ENCODE measurements at regions of chr5 and their contacts with region 1.

Region 1: GRCh38 chr5:118987988-118988865 is at the start of gene DTWD2:
- DNase-seq: peak; percentile 95
- ATAC-seq: peak; percentile 88
- H3K4me3 Mint-ChIP-seq: peak within 1 kb of the TSS; percentile 84
- H3K27ac Mint-ChIP-seq: peak within 1 kb of the TSS; percentile 83
- H3K4me1 Mint-ChIP-seq: peaks cover 33% of the 10 kb centered on the region
- H3K27me3 Mint-ChIP-seq: no peaks in the 10 kb centered on the region
- CTCF ChIP-seq: peak; percentile 93
- total RNA-seq, gene DTWD2: 3.5 and 4.0 TPM in 2 replicates

Region 2: DNA sequence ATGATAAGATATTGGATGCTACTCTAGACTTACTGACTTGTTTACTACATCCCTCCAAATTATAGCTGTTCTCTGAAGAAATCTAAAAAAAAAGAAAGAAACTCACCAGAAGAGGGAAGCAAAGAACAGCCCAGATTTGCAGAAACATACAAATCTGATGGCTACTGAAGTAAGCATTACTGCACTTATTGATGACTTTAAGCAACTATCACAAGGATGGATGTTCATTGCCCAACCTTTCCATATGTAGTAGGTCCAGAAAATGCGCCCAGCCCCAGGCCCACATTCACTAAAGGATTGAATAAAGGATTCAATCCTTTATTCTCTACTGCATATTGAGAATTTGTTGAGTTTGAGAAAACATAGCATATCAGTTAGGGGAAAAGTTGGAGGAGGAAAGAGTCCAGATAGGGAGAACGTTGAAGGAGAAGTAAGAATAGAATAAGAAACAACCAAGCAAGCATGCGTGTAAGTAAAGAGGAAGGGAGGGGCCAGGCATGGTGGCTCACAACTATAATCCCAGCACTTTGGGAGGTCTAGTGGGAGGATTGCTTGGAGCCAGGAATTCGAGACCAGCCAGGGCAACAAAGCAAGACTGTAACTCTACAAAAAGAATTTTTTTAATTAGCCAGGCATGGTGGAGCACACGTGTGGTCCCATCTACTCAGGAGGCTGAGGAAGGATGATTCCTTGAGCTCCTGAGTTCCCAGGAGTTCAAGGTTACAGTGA is 34.0 kb after region 1 on chr5:
- CTCF ChIA-PET with region 1: interaction called, 18 read pairs
- POLR2A ChIA-PET with region 1: interaction called, 3 read pairs
- intact Hi-C with region 1: no loop called
- DNase-seq: no peak
- ATAC-seq: peak; percentile 62
- H3K4me3 Mint-ChIP-seq: peak overlapping the region; percentile 45
- H3K27ac Mint-ChIP-seq: peak overlapping the region; percentile 87
- H3K4me1 Mint-ChIP-seq: peaks cover 72% of the 10 kb centered on the region
- H3K27me3 Mint-ChIP-seq: no peaks in the 10 kb centered on the region
- CTCF ChIP-seq: no peak

Region 3: GRCh38 chr5:119220576-119221197 is 232.5 kb after region 1 on chr5:
- CTCF ChIA-PET with region 1: interaction called, 16 read pairs
- POLR2A ChIA-PET with region 1: interaction called, 4 read pairs
- intact Hi-C with region 1: loop called (anchors 1 kb)
- DNase-seq: no peak
- ATAC-seq: peak; percentile 97
- H3K4me3 Mint-ChIP-seq: peak overlapping the region; percentile 4
- H3K27ac Mint-ChIP-seq: peak overlapping the region; percentile 47
- H3K4me1 Mint-ChIP-seq: peaks cover 25% of the 10 kb centered on the region
- H3K27me3 Mint-ChIP-seq: no peaks in the 10 kb centered on the region
- CTCF ChIP-seq: no peak

Region 4: DNA sequence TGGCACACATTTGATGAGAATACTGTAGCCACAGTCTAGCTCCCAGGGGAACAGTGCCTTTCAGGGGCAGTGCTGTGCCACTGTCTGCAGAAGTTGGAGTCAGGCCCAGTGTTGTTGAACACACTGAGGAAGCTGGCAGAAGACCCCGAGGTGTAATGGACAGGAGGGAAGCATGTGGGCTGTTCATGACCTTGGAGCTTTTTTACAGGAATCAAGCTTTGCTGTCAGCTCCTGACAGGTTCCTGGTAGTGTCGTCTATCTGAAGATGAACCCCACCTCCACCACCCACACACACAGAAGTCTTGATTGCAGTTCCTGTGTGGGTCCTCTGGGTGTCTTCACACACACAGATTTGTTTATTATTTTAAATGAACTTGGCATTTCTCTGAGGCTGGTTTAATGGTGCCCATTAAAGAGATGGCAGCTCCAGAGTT is 327.3 kb after region 1 on chr5:
- CTCF ChIA-PET with region 1: interaction called, 23 read pairs
- POLR2A ChIA-PET with region 1: no interaction called
- intact Hi-C with region 1: loop called (anchors 2 kb)
- DNase-seq: no peak
- ATAC-seq: peak; percentile 78
- H3K4me3 Mint-ChIP-seq: peak overlapping the region; percentile 55
- H3K27ac Mint-ChIP-seq: peak overlapping the region; percentile 82
- H3K4me1 Mint-ChIP-seq: peaks cover 92% of the 10 kb centered on the region
- H3K27me3 Mint-ChIP-seq: no peaks in the 10 kb centered on the region
- CTCF ChIP-seq: no peak

Region 5: GRCh38 chr5:119418531-119419116 is 430.4 kb after region 1 on chr5:
- CTCF ChIA-PET with region 1: interaction called, 101 read pairs
- POLR2A ChIA-PET with region 1: interaction called, 8 read pairs
- intact Hi-C with region 1: no loop called
- DNase-seq: no peak
- ATAC-seq: peak; percentile 66
- H3K4me3 Mint-ChIP-seq: peak overlapping the region; percentile 63
- H3K27ac Mint-ChIP-seq: peak overlapping the region; percentile 89
- H3K4me1 Mint-ChIP-seq: peaks cover 81% of the 10 kb centered on the region
- H3K27me3 Mint-ChIP-seq: no peaks in the 10 kb centered on the region
- CTCF ChIP-seq: no peak

Region 6: DNA sequence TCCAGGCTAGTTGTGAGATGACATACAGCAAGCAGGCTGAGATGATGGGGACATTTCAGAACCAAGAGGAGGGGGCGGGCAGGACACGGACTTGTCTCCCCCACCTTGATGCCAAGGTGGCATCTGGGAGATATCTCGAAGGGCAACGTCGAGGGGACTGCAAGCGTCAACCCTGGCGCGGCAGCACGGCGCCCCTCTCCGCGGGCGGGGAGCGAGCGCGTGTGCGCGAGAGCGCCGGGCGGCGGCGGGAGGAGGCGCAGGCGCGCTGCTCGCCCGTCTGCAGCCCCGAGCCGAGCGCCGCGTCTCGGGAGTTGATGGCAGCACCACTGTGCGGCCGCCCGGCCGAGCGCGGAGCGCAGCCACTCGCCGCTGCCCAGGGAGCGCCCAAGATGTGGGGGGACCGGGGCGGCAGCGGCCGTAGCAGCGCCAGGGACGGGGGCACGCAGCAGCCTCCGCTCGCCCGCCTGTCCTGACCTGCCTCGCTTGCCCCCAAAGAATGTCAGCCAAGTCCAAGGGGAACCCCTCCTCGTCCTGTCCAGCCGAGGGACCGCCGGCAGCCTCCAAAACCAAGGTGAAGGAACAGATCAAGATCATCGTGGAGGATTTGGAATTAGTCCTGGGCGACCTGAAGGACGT is 1475.9 kb after region 1 on chr5 and contains the start of gene PRR16:
- CTCF ChIA-PET with region 1: no interaction called
- POLR2A ChIA-PET with region 1: no interaction called
- intact Hi-C with region 1: loop called (anchors 10 kb)
- DNase-seq: peak; percentile 47
- ATAC-seq: peak; percentile 83
- H3K4me3 Mint-ChIP-seq: peak within 1 kb of the TSS; percentile 85
- H3K27ac Mint-ChIP-seq: peak within 1 kb of the TSS; percentile 42
- H3K4me1 Mint-ChIP-seq: peaks cover 29% of the 10 kb centered on the region
- H3K27me3 Mint-ChIP-seq: peaks cover 17% of the 10 kb centered on the region
- CTCF ChIP-seq: no peak
- total RNA-seq, gene PRR16: 0.15 and 0.29 TPM in 2 replicates

Measured in activated B cell treated with CpG ODN at 0.5 μM for 24 hours (primary cell).